ENCODE measurements at regions of chr15 and their contacts with region 1.

Region 1: GRCh38 chr15:64490598-64491259 is 30.4 kb downstream of the ZNF609 start:
- DNase-seq: no peak
- ATAC-seq: no peak
- H3K4me3 ChIP-seq: no peak overlapping the region
- H3K4me3 Mint-ChIP-seq: no peak overlapping the region
- H3K27ac ChIP-seq: no peak overlapping the region
- H3K27ac Mint-ChIP-seq: peak overlapping the region; percentile 45
- H3K4me1 ChIP-seq: peaks cover 25% of the 10 kb centered on the region
- H3K4me1 Mint-ChIP-seq: peaks cover 52% of the 10 kb centered on the region
- H3K27me3 ChIP-seq: no peaks in the 10 kb centered on the region
- H3K27me3 Mint-ChIP-seq: no peaks in the 10 kb centered on the region
- CTCF ChIP-seq: no peak

Region 2: DNA sequence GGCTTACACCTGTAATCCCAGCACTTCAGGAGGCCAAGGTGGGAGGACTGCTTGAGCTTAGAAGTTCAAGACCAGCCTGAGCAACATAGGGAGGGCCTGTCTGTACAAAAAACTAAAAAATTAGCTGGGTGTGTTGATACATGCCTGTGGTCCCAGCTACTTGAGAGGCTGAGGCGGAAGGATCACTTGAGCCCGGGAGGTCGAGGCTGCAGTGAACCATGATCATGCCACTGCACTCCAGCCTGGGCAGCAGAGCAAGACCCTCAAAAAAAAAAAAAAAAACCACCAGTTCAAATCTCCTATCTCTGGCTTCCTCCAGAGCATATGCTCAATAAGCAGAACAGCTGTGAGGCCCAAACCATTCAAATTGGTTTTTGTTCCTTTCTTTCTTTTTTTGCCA is 23.1 kb after region 1 on chr15:
- CTCF ChIA-PET with region 1: no interaction called
- POLR2A ChIA-PET with region 1: no interaction called
- intact Hi-C with region 1: loop called in 1 of 2 experiments (anchors 2 kb)
- DNase-seq: no peak
- ATAC-seq: no peak
- H3K4me3 ChIP-seq: no peak overlapping the region
- H3K4me3 Mint-ChIP-seq: peak overlapping the region; percentile 39
- H3K27ac ChIP-seq: no peak overlapping the region
- H3K27ac Mint-ChIP-seq: peak overlapping the region; percentile 97
- H3K4me1 ChIP-seq: peaks cover 73% of the 10 kb centered on the region
- H3K4me1 Mint-ChIP-seq: peaks cover 76% of the 10 kb centered on the region
- H3K27me3 ChIP-seq: no peaks in the 10 kb centered on the region
- H3K27me3 Mint-ChIP-seq: no peaks in the 10 kb centered on the region
- CTCF ChIP-seq: no peak

Region 3: DNA sequence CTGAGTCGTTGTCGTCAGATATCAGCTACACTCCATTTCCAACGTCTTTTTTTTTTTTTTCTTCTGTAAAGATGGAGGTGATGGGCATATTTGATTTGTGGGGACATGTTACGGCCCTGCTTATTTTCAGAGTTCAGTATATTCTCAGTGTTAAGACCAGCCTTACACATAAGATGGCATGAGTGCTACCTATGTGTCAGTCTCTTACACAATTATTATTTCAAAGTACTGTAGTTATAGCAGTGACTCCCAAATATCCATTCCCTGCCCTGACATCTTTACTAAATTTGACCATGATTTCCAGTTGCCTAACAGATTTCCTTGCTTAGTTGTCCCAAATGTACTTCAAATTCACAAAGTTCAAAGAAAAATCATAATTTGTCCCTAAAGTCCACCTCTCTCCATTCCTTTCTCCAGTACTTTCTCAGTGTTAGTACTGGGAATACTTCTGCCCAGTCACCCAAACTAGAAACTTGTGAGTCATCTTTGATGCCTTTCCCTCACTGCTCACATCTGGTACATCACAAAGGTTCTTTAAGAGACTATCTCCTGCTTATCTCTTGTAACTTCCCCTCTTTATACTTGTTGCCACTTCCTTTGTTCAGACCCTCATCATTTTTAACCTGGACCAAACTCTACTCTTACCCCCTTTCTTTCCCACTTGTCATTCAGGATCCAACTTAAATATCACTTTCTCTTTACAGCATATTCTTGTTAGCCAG is 36.7 kb after region 1 on chr15:
- CTCF ChIA-PET with region 1: no interaction called
- POLR2A ChIA-PET with region 1: no interaction called
- intact Hi-C with region 1: loop called in 1 of 2 experiments (anchors 5 kb)
- DNase-seq: no peak
- ATAC-seq: no peak
- H3K4me3 ChIP-seq: no peak overlapping the region
- H3K4me3 Mint-ChIP-seq: no peak overlapping the region
- H3K27ac ChIP-seq: no peak overlapping the region
- H3K27ac Mint-ChIP-seq: peak overlapping the region; percentile 42
- H3K4me1 ChIP-seq: peaks cover 46% of the 10 kb centered on the region
- H3K4me1 Mint-ChIP-seq: peaks cover 74% of the 10 kb centered on the region
- H3K27me3 ChIP-seq: no peaks in the 10 kb centered on the region
- H3K27me3 Mint-ChIP-seq: no peaks in the 10 kb centered on the region
- CTCF ChIP-seq: no peak

Region 4: GRCh38 chr15:65466901-65467300 is 976.2 kb after region 1 on chr15:
- CTCF ChIA-PET with region 1: no interaction called
- POLR2A ChIA-PET with region 1: no interaction called
- intact Hi-C with region 1: no loop called
- DNase-seq: no peak
- ATAC-seq: no peak
- H3K4me3 ChIP-seq: no peak overlapping the region
- H3K4me3 Mint-ChIP-seq: no peak overlapping the region
- H3K27ac ChIP-seq: no peak overlapping the region
- H3K27ac Mint-ChIP-seq: no peak overlapping the region
- H3K4me1 ChIP-seq: no peaks in the 10 kb centered on the region
- H3K4me1 Mint-ChIP-seq: no peaks in the 10 kb centered on the region
- H3K27me3 ChIP-seq: no peaks in the 10 kb centered on the region
- H3K27me3 Mint-ChIP-seq: no peaks in the 10 kb centered on the region
- CTCF ChIP-seq: no peak

Measured in CD8-positive, alpha-beta T cell (primary cell).